Left cardiac atrium (tissue), 4 donors: ENCODE measurements at regions of chr6 and their contacts with region 1.

Region 1: GRCh38 chr6:142146828-142147662 is at the starts of genes NMBR and VTA1:
- DNase-seq: peak; percentile 98
- ATAC-seq: peak; percentile 99 to 100
- total RNA-seq, gene NMBR: not detected
- total RNA-seq, gene VTA1: 26.9 to 27.4 TPM

Region 2: GRCh38 chr6:141437685-141438084 is 709.4 kb before region 1 on chr6:
- intact Hi-C with region 1: no loop called
- DNase-seq: no peak
- ATAC-seq: no peak

Region 3: DNA sequence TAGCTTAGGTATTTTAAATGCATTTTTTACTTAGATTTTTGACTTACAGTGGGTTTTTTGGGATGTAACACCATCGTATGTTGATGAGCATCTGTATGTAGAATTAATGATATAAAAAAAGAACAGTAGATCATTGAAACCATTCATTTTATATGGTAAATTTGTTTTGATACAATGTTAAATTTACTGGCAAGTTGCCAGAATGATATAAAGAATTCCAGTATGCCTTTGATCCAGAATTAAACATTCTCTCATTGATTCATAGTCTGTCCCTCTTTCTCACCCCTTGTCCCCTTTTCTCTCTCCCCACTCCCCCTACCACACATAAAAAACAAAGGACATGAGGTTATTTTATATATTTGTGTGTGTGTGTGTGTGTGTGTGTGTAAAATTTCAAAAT is 45.3 kb after region 1 on chr6:
- intact Hi-C with region 1: no loop called
- DNase-seq: no peak
- ATAC-seq: no peak

Region 4: DNA sequence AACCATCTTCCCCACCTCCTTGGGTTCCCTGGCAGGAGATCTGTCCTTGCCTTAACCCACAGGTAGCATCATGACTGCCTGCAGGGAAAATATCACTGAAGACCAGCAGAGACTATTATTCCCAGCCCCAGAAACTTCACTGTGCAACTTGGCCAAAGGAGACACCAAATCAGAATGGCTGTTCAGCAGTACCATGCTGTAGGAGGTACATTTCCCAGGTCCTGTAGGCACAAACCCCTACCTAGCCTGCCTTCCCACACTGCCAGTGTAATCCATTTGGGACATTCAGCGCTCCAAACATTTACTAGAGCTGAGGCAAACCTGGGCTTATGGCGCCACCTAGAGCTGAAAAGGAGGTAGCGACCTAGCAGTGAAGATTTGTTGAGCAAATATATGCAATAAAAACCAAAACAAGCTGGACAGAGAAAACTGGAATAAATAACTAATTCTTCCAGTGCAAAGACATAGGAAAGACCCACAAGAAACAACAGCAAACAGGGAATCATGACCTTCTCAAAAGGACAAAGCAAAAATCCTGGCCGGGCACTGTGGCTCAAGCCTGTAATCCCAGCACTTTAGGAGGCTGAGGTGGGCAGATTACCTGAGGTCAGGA is 60.3 kb after region 1 on chr6:
- intact Hi-C with region 1: loop called (anchors 5 to 10 kb)
- DNase-seq: peak; percentile 34
- ATAC-seq: peak in 1 of 2 donors; percentile 68

Region 5: DNA sequence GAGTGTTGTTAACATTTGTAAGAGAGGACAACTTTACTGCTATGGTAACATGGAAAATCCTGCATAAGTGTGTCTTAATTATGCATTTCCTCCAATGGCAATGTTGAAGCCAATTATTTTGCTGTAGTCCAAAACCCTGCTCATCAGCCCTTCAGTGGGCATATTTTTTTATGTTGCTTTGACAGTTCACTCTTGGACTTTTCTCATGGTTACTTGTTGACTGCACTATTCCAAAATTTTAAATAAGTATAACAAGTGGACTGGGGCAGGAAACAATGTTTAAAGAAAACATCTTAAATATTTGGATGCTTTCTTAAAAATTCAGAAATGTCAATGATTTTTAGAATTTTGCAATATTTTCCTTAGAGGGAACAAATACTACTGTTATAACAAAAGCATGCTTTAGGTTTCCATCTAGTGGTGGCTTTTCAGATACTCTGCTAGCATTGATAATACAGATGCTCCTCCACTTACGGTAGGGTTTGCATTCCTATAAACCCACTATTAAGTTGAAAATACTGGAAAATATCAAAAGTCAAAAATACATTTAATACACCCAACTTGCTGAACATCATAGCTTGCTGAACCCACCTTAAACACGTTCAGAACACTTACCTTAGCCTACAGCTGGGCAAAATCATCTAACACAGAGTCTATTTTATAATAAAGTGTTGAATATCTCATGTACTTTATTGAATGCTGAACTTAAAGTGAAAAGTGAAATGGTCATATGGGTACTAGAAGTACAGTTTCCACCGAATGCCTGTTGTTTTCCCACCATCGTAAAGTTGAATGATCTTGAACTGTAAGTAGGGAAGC is 241.2 kb after region 1 on chr6:
- intact Hi-C with region 1: loop called (anchors 5 kb)
- DNase-seq: no peak
- ATAC-seq: peak in 1 of 2 donors; percentile 59